BJ (cell line): ENCODE measurements at regions of chr22 and their contacts with region 1.

Region 1: GRCh38 chr22:46006379-46007002 is 29.5 kb upstream of the WNT7B start:
- DNase-seq: no peak
- H3K4me3 ChIP-seq: 0 out of 2 replicates have a peak overlapping the region, but pooled peaks have one; percentile 17
- H3K27me3 ChIP-seq: no peaks in the 10 kb centered on the region
- CTCF ChIP-seq: peak; percentile 89

Region 2: DNA sequence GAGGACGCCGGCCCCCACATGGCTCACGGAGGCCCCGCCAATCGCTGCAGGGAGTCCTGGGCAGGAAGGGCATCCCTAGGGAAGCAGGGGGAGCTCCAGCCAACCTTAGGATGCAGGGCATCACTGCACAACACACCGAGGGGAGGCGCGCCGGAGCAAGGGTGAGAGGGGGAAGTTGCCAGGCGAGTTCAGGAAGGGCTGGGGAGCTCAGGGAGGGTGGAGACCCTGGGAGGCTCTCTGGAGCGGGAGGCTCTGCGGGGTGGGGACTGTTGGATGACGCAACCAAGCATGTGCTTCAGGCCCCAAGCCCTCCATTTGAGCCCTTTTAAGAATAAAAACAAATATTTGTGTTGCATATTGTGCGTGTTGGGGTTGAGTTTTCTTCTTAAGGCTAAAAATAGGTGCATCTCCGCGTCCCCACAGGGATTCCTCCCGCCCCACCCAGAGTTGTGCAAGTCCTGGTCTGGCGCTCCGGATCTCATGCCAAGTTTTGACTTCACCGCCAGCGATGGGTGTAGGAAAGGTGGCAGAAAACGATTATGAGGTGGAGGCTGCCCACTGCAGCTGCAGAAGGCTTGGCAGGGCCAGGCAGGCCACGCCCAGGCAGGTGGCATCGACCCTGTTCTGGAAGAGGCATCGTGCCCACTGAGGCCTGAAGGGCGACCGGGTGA is 94.8 kb before region 1 on chr22:
- CTCF ChIA-PET with region 1: no interaction called
- POLR2A ChIA-PET with region 1: no interaction called
- DNase-seq: no peak
- H3K4me3 ChIP-seq: no peak overlapping the region
- H3K27me3 ChIP-seq: peaks cover 17% of the 10 kb centered on the region
- CTCF ChIP-seq: no peak

Region 3: DNA sequence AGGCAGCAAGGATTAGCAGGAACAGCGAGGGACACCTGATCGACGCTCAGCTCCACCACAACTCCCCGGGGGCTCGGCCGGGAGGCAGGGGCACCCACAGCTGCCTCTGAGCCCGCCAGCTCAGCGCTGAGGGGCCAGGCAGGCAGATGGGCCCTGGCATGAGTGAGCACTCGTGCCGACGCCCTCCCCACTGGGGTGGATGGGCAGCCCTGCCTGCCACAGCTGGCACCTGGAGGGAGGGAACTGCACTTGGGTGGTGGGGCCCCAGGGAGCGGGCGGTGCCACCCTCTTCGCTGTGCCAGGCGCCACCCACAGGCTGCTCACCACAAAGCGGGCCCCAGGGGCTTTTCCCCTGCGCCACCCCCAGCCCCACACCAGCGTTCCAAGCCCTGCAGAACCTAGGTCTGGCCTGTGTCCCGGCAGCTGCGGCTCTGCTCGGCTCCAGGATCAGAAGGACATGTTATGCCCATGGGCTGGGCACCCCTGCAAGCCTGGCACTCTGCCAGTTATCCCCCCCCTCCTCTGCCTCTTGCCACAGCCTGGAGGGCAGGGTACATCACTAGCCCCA is 58.3 kb before region 1 on chr22:
- CTCF ChIA-PET with region 1: no interaction called
- POLR2A ChIA-PET with region 1: no interaction called
- DNase-seq: no peak
- H3K4me3 ChIP-seq: no peak overlapping the region
- H3K27me3 ChIP-seq: peaks cover 13% of the 10 kb centered on the region
- CTCF ChIP-seq: no peak

Region 4: GRCh38 chr22:46019351-46019750 is 12.9 kb after region 1 on chr22:
- CTCF ChIA-PET with region 1: interaction called, 19 read pairs
- POLR2A ChIA-PET with region 1: no interaction called
- DNase-seq: no peak
- H3K4me3 ChIP-seq: no peak overlapping the region
- H3K27me3 ChIP-seq: no peaks in the 10 kb centered on the region
- CTCF ChIP-seq: no peak

Region 5: DNA sequence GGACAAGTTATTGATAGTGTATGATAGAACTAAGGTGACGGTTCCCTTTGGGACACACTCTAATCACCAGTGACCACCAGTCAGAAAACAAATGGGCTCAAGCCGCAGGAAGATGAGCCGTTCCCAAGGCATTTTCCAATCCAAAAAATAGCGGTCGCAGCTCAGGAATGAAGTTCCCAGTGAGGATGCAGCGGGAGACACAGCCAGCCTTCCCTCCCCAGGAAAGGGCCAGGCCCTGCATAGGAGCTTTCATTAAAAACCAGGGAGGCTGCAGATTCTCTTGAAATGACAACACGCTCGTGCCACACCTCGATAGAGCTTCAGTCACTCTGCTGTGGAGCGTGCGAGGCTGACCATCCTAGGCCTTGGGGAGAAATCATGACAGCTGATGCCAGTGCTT is 36.3 kb after region 1 on chr22:
- CTCF ChIA-PET with region 1: interaction called, 11 read pairs
- POLR2A ChIA-PET with region 1: no interaction called
- DNase-seq: no peak
- H3K4me3 ChIP-seq: no peak overlapping the region
- H3K27me3 ChIP-seq: no peaks in the 10 kb centered on the region
- CTCF ChIP-seq: no peak

Region 6: DNA sequence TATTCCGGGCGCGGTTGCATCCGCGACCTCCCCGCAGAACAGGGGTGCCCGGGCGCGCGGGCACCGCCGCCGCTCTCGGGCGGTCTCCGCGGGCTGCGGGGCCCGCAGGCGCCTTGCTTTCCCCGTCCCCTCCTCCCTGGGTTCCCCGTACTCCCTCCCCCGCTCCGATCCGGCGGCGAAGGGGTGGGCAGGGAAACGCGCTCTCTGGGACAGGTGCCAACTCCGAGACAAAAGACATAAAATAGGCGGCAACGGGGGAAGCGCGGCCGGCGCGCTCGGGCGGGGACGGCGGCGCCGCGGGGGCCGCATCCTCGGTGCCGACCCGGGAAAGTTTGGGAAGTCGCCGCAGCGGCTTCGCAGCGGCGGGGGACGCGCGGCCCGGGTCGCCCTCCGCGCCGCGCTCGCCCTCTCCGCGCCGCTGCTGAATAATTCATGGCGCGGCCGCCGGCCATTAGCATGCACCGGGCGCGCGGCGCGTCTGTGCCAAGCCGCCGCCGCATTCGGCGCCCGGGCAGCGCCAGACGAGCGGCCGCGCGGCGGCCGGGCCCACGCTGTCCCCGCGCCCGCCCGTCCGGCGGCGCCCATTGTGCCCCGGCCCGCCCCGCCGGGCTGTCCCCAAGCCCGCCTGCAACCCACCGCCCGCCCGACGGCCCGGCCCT is 65.1 kb after region 1 on chr22:
- CTCF ChIA-PET with region 1: interaction called, 77 read pairs
- POLR2A ChIA-PET with region 1: interaction called, 3 read pairs
- DNase-seq: no peak
- H3K4me3 ChIP-seq: peak overlapping the region; percentile 98
- H3K27me3 ChIP-seq: no peaks in the 10 kb centered on the region
- CTCF ChIP-seq: no peak

Region 7: DNA sequence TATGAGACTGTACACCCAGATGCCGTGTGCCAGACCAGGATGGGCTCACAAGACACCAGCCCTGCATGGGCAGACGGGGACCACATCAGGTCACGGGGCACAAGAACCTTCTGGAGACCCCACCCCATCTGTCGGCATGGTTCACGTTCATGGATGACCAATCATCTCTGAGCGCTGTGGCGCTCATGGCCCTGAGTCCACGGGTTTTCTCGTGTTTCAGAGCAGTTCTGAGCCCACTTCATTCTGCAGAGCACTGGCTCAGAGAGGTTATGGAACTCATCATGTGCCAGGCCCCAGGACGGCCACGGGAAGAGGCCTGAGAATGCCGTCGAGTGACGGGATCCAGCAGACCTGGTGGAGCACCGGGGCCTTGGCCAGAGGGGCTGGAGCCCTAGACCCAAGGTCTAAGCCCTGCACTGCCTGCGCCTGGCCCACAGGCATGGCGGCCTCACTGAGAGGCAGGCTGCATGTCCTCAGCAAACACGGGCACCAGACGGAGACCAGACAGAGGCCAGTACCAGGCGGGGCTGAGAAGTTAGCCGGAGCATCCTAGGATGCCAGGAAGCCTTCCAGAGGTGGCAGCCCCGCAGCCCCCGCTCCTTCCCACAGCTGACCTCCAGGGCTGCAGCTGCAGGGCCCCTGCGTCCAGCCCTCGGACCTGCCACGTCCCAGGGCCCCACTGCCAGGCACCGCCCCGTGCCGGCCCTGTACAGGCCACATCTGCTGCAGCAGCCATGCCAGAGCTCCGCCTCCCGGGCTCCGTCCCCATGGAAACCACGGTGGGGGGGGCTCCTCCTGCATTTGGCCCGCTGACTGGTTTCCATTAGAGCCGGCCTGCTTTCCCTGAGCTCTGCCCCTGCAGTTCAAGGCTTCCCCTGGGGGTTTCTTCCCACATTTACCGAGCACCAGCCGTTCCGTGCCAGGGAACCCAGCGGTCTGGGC is 81.1 kb after region 1 on chr22:
- CTCF ChIA-PET with region 1: interaction called, 13 read pairs
- POLR2A ChIA-PET with region 1: no interaction called
- DNase-seq: no peak
- H3K4me3 ChIP-seq: peak overlapping the region; percentile 37
- H3K27me3 ChIP-seq: no peaks in the 10 kb centered on the region
- CTCF ChIP-seq: no peak

Region 8: GRCh38 chr22:46116491-46116958 is 110.0 kb after region 1 on chr22:
- CTCF ChIA-PET with region 1: interaction called, 160 read pairs
- POLR2A ChIA-PET with region 1: interaction called, 5 read pairs
- DNase-seq: no peak
- H3K4me3 ChIP-seq: no peak overlapping the region
- H3K27me3 ChIP-seq: no peaks in the 10 kb centered on the region
- CTCF ChIP-seq: peak; percentile 91

Region 9: DNA sequence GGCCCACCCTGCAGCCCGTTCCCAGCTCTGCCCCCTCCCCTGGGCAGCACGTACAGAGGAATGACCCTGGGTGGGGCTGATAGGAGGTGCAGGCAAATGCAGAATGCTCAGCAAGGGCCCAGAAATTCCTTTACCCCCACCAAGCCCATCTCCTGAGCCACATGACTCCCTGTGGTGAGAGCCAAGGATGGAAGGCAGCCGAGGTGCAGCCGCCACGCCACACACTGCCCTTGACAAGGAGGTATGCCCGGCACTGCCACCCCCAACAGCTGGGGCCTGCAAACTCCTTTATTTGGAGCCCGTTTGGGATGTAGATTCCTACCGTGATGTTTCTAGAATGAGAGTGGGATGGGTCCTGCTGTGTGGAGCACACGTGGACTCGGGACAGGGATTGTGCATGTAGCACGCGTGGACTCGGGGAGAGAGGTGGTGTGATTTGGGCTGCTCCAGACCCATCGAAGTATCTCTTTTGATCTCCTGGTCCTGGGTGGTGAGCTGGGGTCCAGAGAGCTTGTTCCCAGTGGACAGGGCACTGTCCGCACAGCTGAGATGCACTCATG is 303.1 kb after region 1 on chr22:
- CTCF ChIA-PET with region 1: interaction called, 12 read pairs
- POLR2A ChIA-PET with region 1: no interaction called
- DNase-seq: no peak
- H3K4me3 ChIP-seq: no peak overlapping the region
- H3K27me3 ChIP-seq: no peaks in the 10 kb centered on the region
- CTCF ChIP-seq: no peak